CD8-positive, alpha-beta T cell (primary cell): ENCODE measurements at regions of chr1 and their contacts with region 1.

Region 1: DNA sequence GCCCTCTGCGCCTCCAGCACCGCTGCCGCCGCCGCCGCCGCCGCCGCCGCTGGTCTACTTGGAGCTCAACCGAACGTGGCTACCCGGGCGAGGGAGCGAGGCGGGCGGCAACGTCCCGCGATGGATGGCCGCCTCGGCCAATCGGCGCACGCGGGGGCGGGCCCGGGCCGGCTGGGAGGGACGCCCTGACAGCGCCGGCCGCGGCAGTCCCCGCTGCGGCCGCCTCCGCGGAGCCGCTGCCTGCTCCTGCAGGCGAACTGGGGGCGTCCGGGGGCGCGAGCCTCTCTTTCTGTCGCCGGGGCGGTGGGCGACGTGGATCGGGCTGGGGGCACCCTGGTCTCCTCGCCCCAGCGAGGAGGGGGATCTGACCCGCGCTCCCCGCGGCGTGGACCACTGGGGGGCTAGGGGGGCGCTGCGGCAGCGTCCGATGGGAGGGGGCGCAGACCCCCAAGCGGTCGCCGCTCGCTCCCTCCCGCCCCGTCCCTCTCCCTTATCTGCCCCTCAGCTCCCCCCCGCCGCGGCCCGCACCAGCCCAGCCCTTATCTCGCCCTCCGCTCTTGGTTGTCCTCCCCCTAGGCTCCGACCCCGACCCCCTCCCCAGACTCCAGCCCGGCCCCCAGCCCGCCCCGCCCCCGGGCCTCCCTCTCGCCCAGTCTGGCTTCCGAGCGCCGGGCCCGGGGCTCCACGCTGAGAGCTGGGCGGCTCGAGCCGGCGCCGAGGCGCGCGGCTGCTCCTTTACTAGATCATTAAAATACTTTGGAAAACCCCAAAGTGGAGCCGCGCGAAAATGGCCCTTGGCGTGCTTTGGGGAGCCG is at the start of gene SSBP3:
- DNase-seq: peak; percentile 79 to 96 (median 92)
- ATAC-seq: peak; percentile 90
- H3K4me3 ChIP-seq: peak within 1 kb of the TSS; percentile 81 to 88
- H3K4me3 Mint-ChIP-seq: peak within 1 kb of the TSS; percentile 96
- H3K27ac ChIP-seq: peak within 1 kb of the TSS; percentile 55 to 76
- H3K27ac Mint-ChIP-seq: peak within 1 kb of the TSS; percentile 91
- H3K4me1 ChIP-seq: peaks cover 57% of the 10 kb centered on the region
- H3K4me1 Mint-ChIP-seq: peaks cover 64% of the 10 kb centered on the region
- H3K27me3 ChIP-seq: no peaks in the 10 kb centered on the region
- H3K27me3 Mint-ChIP-seq: no peaks in the 10 kb centered on the region
- CTCF ChIP-seq: no peak
- total RNA-seq, gene SSBP3: 41.5 to 47.7 TPM

Region 2: DNA sequence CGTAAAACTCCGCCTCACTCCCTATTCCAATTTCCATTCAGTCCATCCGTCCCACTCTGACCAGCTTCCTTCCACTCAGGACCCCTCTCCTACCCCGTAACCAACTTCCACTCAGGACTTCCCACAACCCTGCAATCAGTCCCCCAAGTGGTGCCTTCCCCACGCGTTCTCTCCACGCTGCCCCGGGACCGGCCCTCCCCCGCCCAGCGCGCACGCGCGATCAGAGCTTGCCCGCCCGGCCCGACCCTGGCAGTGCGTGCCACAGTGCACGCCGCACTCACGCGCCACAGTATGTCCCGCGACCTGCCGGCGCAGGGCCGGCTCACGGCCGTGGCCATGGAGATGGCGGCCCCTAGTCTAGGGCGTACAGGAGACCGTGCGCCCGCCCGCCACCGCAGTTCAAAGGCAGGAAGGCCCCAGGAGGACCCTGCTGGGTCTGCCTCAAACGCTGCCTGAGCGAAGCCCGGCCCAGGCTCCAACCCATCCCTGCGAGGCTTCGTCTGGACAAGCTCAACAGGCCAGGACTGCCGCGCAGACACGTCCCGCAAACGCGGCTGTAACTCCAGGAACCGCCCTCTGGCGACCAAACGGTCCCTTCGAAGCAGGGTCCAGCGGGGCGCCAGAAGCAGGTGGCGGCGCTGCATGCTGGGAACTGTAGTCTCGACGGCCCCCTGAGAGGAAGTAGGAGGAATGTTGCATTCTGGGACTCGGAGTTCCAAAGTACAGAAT is 568.5 kb before region 1 on chr1 and contains the start of gene NDC1:
- CTCF ChIA-PET with region 1: no interaction called
- POLR2A ChIA-PET with region 1: no interaction called
- intact Hi-C with region 1: loop called in 1 of 2 experiments (anchors 2 kb)
- DNase-seq: peak; percentile 77 to 96 (median 88)
- ATAC-seq: peak; percentile 90
- H3K4me3 ChIP-seq: peak within 1 kb of the TSS; percentile 82 to 93
- H3K4me3 Mint-ChIP-seq: peak within 1 kb of the TSS; percentile 91
- H3K27ac ChIP-seq: peak within 1 kb of the TSS; percentile 91 to 100
- H3K27ac Mint-ChIP-seq: peak within 1 kb of the TSS; percentile 98
- H3K4me1 ChIP-seq: peaks cover 16% of the 10 kb centered on the region
- H3K4me1 Mint-ChIP-seq: peaks cover 26% of the 10 kb centered on the region
- H3K27me3 ChIP-seq: no peaks in the 10 kb centered on the region
- H3K27me3 Mint-ChIP-seq: peaks cover 3% of the 10 kb centered on the region
- CTCF ChIP-seq: no peak
- total RNA-seq, gene NDC1: 6.1 to 6.6 TPM

Region 3: DNA sequence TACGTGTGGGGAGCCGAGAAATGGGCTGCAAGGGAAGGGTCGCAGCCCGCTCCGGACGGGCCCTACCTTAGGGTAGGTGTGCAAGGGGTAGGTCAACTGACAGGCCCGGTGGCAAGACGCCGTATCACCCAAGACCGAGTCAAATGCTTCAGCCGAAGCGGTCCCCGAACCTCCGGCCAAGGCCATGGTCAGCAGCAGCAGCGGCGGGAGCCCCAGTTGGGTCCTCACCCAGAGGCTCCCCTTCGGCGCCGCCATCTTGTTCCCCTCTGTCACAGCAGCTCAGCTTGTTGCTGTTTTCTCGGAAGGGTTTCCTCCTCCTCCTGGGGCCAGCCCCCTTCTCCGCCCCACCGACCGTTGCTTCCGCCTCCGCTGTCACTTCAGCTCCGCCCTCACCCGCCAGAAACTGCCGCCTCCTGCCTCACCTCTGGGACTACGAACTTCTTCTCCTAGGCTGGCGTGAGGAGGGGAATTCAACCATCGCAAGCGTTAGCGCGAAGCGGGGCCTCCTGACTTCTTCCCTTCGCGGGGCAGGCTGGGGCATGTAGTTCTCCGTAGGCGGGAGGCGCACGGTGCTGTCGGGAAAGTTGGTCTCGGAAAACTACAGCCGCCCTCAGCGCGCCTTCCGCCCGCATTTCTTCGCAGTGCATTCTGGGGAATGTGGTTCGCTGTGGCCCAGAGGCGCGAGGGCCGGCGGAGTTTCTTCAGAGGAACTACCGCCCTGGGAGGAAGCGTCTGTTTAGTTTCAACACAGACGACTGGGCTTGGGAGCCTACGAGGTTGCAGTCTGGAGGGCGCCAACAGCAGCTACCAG is 353.4 kb before region 1 on chr1 and contains the starts of genes TCEANC2 and TMEM59:
- CTCF ChIA-PET with region 1: no interaction called
- POLR2A ChIA-PET with region 1: no interaction called
- intact Hi-C with region 1: loop called (anchors 1 kb)
- DNase-seq: peak; percentile 94 to 100 (median 97)
- ATAC-seq: peak; percentile 89
- H3K4me3 ChIP-seq: peak within 1 kb of the TSS; percentile 87 to 89
- H3K4me3 Mint-ChIP-seq: no peak within 1 kb of the TSS
- H3K27ac ChIP-seq: peak within 1 kb of the TSS; percentile 89 to 93
- H3K27ac Mint-ChIP-seq: no peak within 1 kb of the TSS
- H3K4me1 ChIP-seq: peaks cover 39% of the 10 kb centered on the region
- H3K4me1 Mint-ChIP-seq: peaks cover 51% of the 10 kb centered on the region
- H3K27me3 ChIP-seq: no peaks in the 10 kb centered on the region
- H3K27me3 Mint-ChIP-seq: no peaks in the 10 kb centered on the region
- CTCF ChIP-seq: no peak
- total RNA-seq, gene TCEANC2: 1.8 to 2.1 TPM
- total RNA-seq, gene TMEM59: 125 to 142 TPM

Region 4: DNA sequence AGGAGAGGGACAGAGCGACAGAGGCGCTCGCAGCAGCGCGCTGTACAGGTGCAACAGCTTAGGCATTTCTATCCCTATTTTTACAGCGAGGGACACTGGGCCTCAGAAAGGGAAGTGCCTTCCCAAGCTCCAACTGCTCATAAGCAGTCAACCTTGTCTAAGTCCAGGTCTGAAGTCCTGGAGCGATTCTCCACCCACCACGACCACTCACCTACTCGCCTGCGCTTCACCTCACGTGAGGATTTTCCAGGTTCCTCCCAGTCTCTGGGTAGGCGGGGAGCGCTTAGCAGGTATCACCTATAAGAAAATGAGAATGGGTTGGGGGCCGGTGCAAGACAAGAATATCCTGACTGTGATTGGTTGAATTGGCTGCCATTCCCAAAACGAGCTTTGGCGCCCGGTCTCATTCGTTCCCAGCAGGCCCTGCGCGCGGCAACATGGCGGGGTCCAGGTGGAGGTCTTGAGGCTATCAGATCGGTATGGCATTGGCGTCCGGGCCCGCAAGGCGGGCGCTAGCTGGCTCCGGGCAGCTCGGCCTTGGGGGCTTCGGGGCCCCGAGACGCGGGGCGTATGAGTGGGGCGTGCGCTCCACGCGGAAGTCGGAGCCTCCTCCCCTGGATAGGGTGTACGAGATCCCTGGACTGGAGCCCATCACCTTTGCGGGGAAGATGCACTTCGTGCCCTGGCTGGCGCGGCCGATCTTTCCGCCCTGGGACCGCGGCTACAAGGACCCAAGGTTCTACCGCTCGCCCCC is 206.6 kb before region 1 on chr1 and contains the starts of genes CYB5RL and MRPL37:
- CTCF ChIA-PET with region 1: no interaction called
- POLR2A ChIA-PET with region 1: interaction called, 13 read pairs
- intact Hi-C with region 1: loop called (anchors 1 to 2 kb)
- DNase-seq: peak; percentile 74 to 96 (median 89)
- ATAC-seq: peak; percentile 97
- H3K4me3 ChIP-seq: peak within 1 kb of the TSS; percentile 59 to 93
- H3K4me3 Mint-ChIP-seq: peak within 1 kb of the TSS; percentile 94
- H3K27ac ChIP-seq: peak within 1 kb of the TSS; percentile 60 to 75
- H3K27ac Mint-ChIP-seq: peak within 1 kb of the TSS; percentile 84
- H3K4me1 ChIP-seq: peaks cover 19% of the 10 kb centered on the region
- H3K4me1 Mint-ChIP-seq: peaks cover 43% of the 10 kb centered on the region
- H3K27me3 ChIP-seq: no peaks in the 10 kb centered on the region
- H3K27me3 Mint-ChIP-seq: no peaks in the 10 kb centered on the region
- CTCF ChIP-seq: no peak
- total RNA-seq, gene CYB5RL: 2.1 to 3.0 TPM
- total RNA-seq, gene MRPL37: 27.4 to 29.8 TPM

Region 5: DNA sequence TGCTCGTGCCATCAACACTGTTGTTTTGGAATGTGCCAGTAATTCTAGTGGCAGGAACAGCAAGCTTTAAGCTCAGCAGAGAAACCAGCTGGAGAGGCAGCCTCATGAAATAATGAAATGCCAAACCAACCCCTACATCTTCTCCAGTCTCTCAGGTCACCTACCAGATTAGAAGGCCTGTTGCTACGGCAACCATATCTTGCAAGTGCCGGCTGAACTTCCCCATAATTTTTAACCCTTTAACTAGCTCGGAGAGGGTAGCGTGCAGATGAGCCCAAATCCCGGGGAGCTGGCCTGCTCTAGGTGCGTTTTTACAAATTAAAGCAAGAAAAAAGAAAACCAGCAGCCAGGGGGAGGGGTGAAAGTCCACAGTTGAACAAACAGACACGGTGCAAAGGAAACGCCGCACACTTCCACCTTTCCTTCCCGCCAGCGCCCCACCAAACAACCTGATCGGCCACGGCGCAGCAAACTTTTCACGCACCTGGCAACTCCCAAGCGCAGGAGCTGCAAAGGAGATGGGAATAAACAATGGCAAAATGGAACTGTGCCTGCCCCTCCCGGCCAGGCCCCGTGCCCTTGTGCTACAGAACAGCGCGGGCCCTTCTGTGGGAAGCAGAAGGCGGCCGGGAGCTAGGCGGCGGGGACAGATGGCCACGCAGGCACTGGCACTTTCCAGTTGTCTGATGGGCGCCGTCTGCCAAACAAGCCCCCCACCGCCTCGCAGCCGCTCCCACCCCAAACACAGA is 50.4 kb before region 1 on chr1:
- CTCF ChIA-PET with region 1: no interaction called
- POLR2A ChIA-PET with region 1: interaction called, 8 read pairs
- intact Hi-C with region 1: loop called (anchors 1 to 2 kb)
- DNase-seq: peak in 2 of 9 experiments; percentile 29 to 54
- ATAC-seq: peak; percentile 3
- H3K4me3 ChIP-seq: peak overlapping the region; percentile 36 to 64
- H3K4me3 Mint-ChIP-seq: peak overlapping the region; percentile 86
- H3K27ac ChIP-seq: peak overlapping the region; percentile 18 to 41
- H3K27ac Mint-ChIP-seq: peak overlapping the region; percentile 92
- H3K4me1 ChIP-seq: peaks cover 53% of the 10 kb centered on the region
- H3K4me1 Mint-ChIP-seq: peaks cover 88% of the 10 kb centered on the region
- H3K27me3 ChIP-seq: no peaks in the 10 kb centered on the region
- H3K27me3 Mint-ChIP-seq: no peaks in the 10 kb centered on the region
- CTCF ChIP-seq: no peak

Region 6: GRCh38 chr1:54439550-54440223 is 33.1 kb after region 1 on chr1:
- CTCF ChIA-PET with region 1: no interaction called
- POLR2A ChIA-PET with region 1: no interaction called
- intact Hi-C with region 1: no loop called
- DNase-seq: no peak
- ATAC-seq: no peak
- H3K4me3 ChIP-seq: no peak overlapping the region
- H3K4me3 Mint-ChIP-seq: no peak overlapping the region
- H3K27ac ChIP-seq: no peak overlapping the region
- H3K27ac Mint-ChIP-seq: no peak overlapping the region
- H3K4me1 ChIP-seq: no peaks in the 10 kb centered on the region
- H3K4me1 Mint-ChIP-seq: peaks cover 3% of the 10 kb centered on the region
- H3K27me3 ChIP-seq: no peaks in the 10 kb centered on the region
- H3K27me3 Mint-ChIP-seq: no peaks in the 10 kb centered on the region
- CTCF ChIP-seq: no peak

Region 7: GRCh38 chr1:54488779-54489626 is 82.5 kb after region 1 on chr1:
- CTCF ChIA-PET with region 1: interaction called, 53 read pairs
- POLR2A ChIA-PET with region 1: interaction called, 70 read pairs
- intact Hi-C with region 1: loop called (anchors 1 kb)
- DNase-seq: peak; percentile 45 to 89 (median 74)
- ATAC-seq: peak; percentile 47
- H3K4me3 ChIP-seq: peak overlapping the region; percentile 71 to 90
- H3K4me3 Mint-ChIP-seq: peak overlapping the region; percentile 83
- H3K27ac ChIP-seq: peak overlapping the region; percentile 42 to 73
- H3K27ac Mint-ChIP-seq: peak overlapping the region; percentile 67
- H3K4me1 ChIP-seq: peaks cover 34% of the 10 kb centered on the region
- H3K4me1 Mint-ChIP-seq: peaks cover 37% of the 10 kb centered on the region
- H3K27me3 ChIP-seq: peaks cover 0 to 3% of the 10 kb centered on the region in 2 experiments
- H3K27me3 Mint-ChIP-seq: peaks cover 3% of the 10 kb centered on the region
- CTCF ChIP-seq: peak; percentile 96

Region 8: GRCh38 chr1:54549181-54549924 is 142.8 kb after region 1 on chr1:
- CTCF ChIA-PET with region 1: no interaction called
- POLR2A ChIA-PET with region 1: no interaction called
- intact Hi-C with region 1: no loop called
- DNase-seq: no peak
- ATAC-seq: no peak
- H3K4me3 ChIP-seq: no peak overlapping the region
- H3K4me3 Mint-ChIP-seq: no peak overlapping the region
- H3K27ac ChIP-seq: no peak overlapping the region
- H3K27ac Mint-ChIP-seq: no peak overlapping the region
- H3K4me1 ChIP-seq: no peaks in the 10 kb centered on the region
- H3K4me1 Mint-ChIP-seq: no peaks in the 10 kb centered on the region
- H3K27me3 ChIP-seq: no peaks in the 10 kb centered on the region
- H3K27me3 Mint-ChIP-seq: no peaks in the 10 kb centered on the region
- CTCF ChIP-seq: no peak

Region 9: DNA sequence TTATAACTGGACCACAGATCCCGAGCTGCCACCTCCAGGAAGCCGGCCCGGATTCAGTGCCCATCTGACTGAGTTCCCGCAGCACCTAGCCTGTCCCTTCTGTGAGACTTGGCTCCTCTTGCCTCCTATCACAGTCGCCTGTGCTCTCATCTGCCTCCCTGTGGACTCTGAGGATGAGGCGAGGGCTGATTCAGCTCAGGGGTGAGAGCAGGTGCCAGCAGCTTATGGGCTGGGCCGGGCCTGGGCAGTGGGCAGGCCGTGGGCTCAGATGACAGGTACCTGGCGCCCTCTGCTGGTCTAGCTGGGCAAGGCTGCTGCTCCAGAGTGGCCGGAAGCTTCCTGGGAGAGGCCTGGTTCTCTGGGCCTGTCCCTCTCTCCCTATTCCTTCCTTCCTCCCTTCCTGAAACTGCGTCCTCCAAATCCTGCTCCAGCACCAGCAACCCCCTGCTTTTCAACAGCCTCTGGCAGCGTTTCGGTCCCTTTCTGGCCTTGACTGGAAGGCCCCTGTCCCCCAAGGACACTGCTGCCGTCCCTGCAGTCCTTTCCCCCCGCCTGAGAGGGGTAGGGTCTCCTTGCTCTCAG is 615.5 kb after region 1 on chr1:
- CTCF ChIA-PET with region 1: no interaction called
- POLR2A ChIA-PET with region 1: no interaction called
- intact Hi-C with region 1: no loop called
- DNase-seq: peak; percentile 25 to 73 (median 55)
- ATAC-seq: peak; percentile 68
- H3K4me3 ChIP-seq: no peak overlapping the region
- H3K4me3 Mint-ChIP-seq: no peak overlapping the region
- H3K27ac ChIP-seq: no peak overlapping the region
- H3K27ac Mint-ChIP-seq: no peak overlapping the region
- H3K4me1 ChIP-seq: no peaks in the 10 kb centered on the region
- H3K4me1 Mint-ChIP-seq: no peaks in the 10 kb centered on the region
- H3K27me3 ChIP-seq: no peaks in the 10 kb centered on the region
- H3K27me3 Mint-ChIP-seq: peaks cover 12% of the 10 kb centered on the region
- CTCF ChIP-seq: peak; percentile 61

Region 10: DNA sequence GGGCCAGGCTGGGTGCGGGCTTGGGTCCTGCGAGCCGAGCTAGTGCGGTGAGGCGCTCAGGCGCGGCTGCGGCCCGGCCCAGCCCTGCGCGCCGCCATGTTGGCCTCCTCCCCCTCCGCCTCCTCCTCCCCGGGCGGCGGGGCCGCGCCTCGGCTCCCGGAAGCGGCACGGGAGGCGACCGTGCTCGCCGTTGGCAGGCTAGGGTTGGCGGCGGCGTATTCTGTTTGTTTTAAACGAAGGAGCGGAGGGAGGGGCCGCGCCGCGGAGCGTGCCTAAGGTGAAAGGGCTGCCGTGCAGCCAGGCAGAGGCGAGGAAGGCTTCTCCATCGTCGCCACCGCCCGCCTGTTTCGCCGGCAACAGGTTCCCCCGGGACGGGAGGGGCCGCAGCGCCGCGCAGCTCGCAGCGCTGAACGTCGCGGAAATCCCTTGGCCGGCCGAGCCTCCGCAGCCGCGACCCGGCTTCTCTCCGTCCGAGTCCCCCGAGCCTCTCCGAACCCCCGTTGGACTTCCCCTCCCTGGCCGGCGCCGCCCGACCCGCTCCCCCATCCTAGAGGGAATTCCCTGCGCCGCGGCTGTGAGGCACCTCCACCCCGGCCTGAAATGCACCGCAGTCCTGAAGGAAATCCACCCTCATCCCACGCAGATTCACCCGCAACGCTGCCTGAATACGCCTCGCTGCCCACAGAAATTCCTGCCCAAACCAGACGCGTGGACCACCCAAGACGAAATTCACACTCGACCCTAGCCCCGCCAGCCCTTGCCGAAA is 808.9 kb after region 1 on chr1 and contains the start of gene USP24:
- CTCF ChIA-PET with region 1: no interaction called
- POLR2A ChIA-PET with region 1: no interaction called
- intact Hi-C with region 1: loop called in 1 of 2 experiments (anchors 10 kb)
- DNase-seq: peak; percentile 60 to 93 (median 82)
- ATAC-seq: peak; percentile 76
- H3K4me3 ChIP-seq: peak within 1 kb of the TSS; percentile 76 to 83
- H3K4me3 Mint-ChIP-seq: peak within 1 kb of the TSS; percentile 97
- H3K27ac ChIP-seq: peak within 1 kb of the TSS; percentile 81 to 92
- H3K27ac Mint-ChIP-seq: peak within 1 kb of the TSS; percentile 98
- H3K4me1 ChIP-seq: peaks cover 45% of the 10 kb centered on the region
- H3K4me1 Mint-ChIP-seq: peaks cover 68% of the 10 kb centered on the region
- H3K27me3 ChIP-seq: no peaks in the 10 kb centered on the region
- H3K27me3 Mint-ChIP-seq: no peaks in the 10 kb centered on the region
- CTCF ChIP-seq: no peak
- total RNA-seq, gene USP24: 74.0 to 79.6 TPM